Heart right ventricle (tissue), 16 donors: ENCODE measurements at regions of chr2 and their contacts with region 1.

Region 1: GRCh38 chr2:208254871-208255556 is at the start of gene IDH1:
- DNase-seq: peak; percentile 98
- ATAC-seq: peak; percentile 95 to 99 (median 98)
- H3K4me3 ChIP-seq: peak within 1 kb of the TSS; percentile 71 to 93 (median 84)
- H3K27ac ChIP-seq: peak within 1 kb of the TSS; percentile 50 to 92 (median 78)
- H3K4me1 ChIP-seq: peaks cover 0 to 50% (median 28%) of the 10 kb centered on the region in 9 donors
- H3K27me3 ChIP-seq: no peaks in the 10 kb centered on the region
- CTCF ChIP-seq: peak; percentile 16 to 60 (median 43)
- total RNA-seq, gene IDH1: 18.5 to 71.3 (median 32.0) TPM

Region 2: GRCh38 chr2:208101716-208102631 is 153.0 kb before region 1 on chr2:
- intact Hi-C with region 1: loop called in 1 of 10 experiments (anchors 10 kb)
- DNase-seq: no peak
- ATAC-seq: peak in 2 of 8 donors; percentile 35 to 42
- H3K4me3 ChIP-seq: no peak overlapping the region
- H3K27ac ChIP-seq: no peak overlapping the region
- H3K4me1 ChIP-seq: peaks cover 0 to 11% (median 3%) of the 10 kb centered on the region in 9 donors
- H3K27me3 ChIP-seq: peaks cover 0 to 17% (median 0%) of the 10 kb centered on the region in 7 donors
- CTCF ChIP-seq: peak in 4 of 9 donors; percentile 14 to 36 (median 26)

Region 3: DNA sequence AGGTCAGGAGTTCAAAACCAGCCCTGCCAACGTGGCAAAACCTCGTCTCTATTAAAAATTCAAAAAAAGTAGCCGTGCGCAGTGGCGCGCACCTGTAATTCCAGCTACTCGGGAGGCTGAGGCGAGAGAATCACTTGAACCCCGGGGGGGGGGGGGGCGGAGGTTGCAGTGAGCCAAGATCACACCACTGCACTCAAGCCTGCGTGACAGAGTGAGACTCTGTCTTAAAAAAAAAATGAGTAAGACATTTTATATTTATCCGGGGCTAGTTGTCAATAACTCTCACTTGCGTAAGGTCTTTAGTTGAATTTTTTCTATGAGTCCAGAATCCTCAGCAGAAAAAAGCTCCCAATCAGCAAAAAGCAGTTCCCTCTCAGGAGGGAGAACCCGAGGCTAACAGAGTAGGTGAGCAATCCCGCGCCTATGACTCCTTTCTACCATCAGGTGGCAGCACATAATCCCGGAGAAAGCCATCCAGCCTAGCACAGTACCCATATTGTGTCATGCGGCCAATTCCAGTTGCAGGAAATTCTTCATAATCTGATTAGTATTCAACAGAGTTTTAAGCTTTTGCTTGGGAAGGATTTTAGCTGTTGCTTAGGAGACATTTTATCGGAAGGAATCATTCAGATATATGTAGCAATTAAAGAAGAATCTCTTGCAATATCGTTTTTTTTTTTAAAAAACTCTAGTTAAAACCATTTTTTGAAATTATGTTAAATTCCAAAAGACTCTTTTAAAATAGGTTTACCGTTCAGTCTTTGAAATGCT is 79.8 kb before region 1 on chr2:
- intact Hi-C with region 1: loop called in 6 of 10 experiments (anchors 2 to 10 kb)
- DNase-seq: peak; percentile 28 to 77
- ATAC-seq: peak; percentile 92 to 98 (median 96)
- H3K4me3 ChIP-seq: no peak overlapping the region
- H3K27ac ChIP-seq: peak overlapping the region in 1 of 10 donors; percentile 41
- H3K4me1 ChIP-seq: peaks cover 0 to 23% (median 0%) of the 10 kb centered on the region in 9 donors
- H3K27me3 ChIP-seq: peaks cover 0 to 11% (median 0%) of the 10 kb centered on the region in 7 donors
- CTCF ChIP-seq: peak; percentile 64 to 93 (median 88)

Region 4: DNA sequence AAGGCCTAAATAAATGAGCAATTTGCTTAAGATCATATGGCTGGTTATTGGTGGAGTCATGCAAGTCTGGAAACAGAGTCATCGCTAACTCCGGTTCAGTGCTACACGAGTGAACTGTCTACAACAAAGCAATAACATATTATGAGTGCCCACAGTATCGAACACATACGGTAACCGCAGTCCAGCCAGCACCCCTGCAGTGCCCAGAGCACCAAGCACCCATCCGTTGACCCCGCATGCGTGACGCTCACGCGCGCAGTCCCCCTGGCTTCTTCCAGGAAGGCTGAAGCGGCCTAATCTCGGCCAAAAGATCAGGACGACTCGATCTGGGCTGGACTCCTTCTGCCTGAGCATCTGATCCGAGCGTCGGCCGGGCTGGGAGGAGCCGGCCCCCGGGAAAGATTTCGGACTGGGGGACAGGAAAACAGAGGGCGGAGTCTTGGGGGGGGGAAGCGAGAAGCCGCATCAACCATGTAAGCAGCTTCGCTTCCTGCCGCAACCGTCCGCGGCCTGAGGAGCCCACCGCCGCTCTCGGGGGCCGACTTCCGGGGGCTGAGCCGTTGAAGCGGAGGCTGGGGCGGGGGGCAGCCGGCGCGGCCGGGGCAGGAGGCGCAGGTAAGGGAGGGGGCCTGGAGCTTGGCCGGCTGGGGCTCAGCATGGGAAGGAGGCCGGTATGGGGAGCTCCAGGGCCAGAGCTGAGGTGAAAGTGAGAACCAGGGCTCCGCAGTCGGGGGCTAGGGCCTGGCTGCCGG is 11.0 kb after region 1 on chr2 and contains the start of gene PIKFYVE:
- intact Hi-C with region 1: loop called in 1 of 10 experiments (anchors 1 kb)
- DNase-seq: peak; percentile 92 to 98
- ATAC-seq: peak; percentile 97 to 98 (median 97)
- H3K4me3 ChIP-seq: peak within 1 kb of the TSS; percentile 73 to 99 (median 90)
- H3K27ac ChIP-seq: peak within 1 kb of the TSS; percentile 66 to 99 (median 96)
- H3K4me1 ChIP-seq: peaks cover 0 to 41% (median 35%) of the 10 kb centered on the region in 9 donors
- H3K27me3 ChIP-seq: no peaks in the 10 kb centered on the region
- CTCF ChIP-seq: peak in 2 of 9 donors; percentile 16 to 26
- total RNA-seq, gene PIKFYVE: 12.9 to 24.8 (median 18.4) TPM

Region 5: DNA sequence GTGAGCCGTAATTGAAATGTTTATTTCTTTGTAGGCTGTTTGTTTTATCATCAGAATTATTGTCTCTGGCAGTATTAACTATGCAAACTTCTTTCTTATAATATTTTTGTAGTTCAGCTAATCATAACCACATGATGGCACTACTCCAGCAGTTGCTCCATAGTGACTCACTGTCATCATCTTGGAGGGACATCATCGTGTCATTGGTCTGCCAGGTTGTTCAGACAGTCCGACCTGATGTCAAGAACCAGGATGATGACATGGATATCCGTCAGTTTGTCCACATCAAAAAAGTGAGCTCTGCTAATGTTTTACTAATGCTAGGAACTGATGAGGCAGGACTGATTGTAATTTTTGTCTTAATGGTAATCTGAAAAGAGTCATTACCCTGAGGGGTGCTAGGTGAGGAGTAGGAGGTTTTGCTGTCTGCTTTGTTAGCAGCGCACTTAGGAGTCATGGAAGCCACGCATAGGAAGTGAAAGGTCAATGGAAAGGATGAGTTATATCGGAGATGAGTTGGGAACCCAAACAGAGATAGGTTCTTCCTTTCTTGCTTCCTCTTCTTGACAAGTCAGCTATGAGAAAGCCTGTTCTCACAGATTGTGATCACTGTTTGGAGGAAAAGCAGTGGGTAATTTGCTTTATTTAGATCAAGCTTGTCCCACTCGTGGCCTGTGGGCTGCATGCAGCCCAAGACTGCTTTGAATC is 60.2 kb after region 1 on chr2:
- intact Hi-C with region 1: loop called in 2 of 10 experiments (anchors 5 kb)
- DNase-seq: no peak
- ATAC-seq: peak in 2 of 8 donors; percentile 26 to 58
- H3K4me3 ChIP-seq: no peak overlapping the region
- H3K27ac ChIP-seq: no peak overlapping the region
- H3K4me1 ChIP-seq: peaks cover 0 to 33% (median 13%) of the 10 kb centered on the region in 9 donors
- H3K27me3 ChIP-seq: no peaks in the 10 kb centered on the region
- CTCF ChIP-seq: no peak

Region 6: DNA sequence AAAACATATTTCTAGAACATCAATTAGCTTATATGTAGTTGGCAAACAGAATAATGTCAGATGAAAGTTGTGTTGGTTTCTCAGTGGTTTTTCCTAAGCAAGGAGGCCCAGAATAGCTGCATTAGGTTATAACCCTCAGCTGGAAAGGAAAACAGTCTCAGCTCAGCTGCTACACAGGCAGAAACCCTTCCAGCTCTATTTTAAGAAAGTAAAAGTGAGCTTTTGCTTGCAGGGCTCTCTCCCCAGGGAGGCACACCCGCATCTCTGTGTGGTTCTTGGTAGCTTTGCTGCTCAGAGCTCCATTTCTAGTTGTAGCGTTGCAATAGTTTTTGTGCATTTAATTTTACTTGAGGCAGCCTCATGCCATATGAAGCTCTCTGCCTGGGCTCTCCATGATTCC is 65.7 kb after region 1 on chr2:
- intact Hi-C with region 1: loop called in 2 of 10 experiments (anchors 5 kb)
- DNase-seq: peak; percentile 47 to 75
- ATAC-seq: peak; percentile 93 to 98 (median 97)
- H3K4me3 ChIP-seq: peak overlapping the region in 2 of 10 donors; percentile 3 to 12
- H3K27ac ChIP-seq: peak overlapping the region in 8 of 10 donors; percentile 1 to 79 (median 59)
- H3K4me1 ChIP-seq: peaks cover 0 to 40% (median 25%) of the 10 kb centered on the region in 9 donors
- H3K27me3 ChIP-seq: no peaks in the 10 kb centered on the region
- CTCF ChIP-seq: no peak